ENCODE measurements at regions of chr11 and their contacts with region 1.

Region 1: DNA sequence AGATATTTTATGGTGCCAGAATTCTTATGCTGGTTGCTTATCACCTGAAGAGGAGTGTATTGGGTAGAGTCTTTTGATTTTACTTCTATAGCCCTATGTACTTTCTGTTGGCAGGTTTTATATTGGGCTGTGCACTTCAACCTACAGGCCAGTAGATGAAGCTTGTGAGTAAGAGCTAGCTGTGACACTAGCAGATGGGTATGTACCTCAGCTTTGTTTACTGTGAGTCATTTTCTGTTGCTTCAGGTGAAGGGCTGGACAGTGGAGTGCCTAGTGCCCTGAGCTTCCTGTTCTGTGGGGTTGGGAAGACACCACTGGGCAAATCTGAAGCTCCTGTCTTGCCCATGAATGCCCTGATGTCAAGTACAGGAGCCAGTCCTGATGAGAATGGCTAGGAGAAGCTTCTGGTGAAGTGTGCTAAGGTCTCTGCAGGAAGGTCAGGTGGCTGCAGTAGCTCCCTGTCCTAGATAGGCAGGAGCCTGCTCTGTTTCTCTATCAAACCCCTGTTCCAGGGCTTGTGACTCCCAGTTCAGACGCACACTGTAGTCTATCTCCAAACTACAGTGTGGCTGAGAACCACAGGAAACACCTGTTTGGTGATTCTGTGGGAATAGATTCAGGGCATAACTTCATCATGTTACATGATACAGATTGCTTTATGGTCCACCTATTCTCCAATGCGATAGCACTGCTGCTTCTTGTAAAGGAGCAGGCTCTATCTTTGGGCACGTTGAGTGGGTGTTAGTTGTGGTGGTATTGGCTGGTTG is 755.7 kb downstream of the KCNA4 start:
- DNase-seq: no peak
- H3K4me3 ChIP-seq: no peak overlapping the region
- H3K27ac ChIP-seq: no peak overlapping the region
- H3K4me1 ChIP-seq: no peaks in the 10 kb centered on the region
- H3K27me3 ChIP-seq: no peaks in the 10 kb centered on the region
- CTCF ChIP-seq: no peak
- EP300 ChIP-seq: no peak
- POLR2A ChIP-seq: no peak

Region 2: DNA sequence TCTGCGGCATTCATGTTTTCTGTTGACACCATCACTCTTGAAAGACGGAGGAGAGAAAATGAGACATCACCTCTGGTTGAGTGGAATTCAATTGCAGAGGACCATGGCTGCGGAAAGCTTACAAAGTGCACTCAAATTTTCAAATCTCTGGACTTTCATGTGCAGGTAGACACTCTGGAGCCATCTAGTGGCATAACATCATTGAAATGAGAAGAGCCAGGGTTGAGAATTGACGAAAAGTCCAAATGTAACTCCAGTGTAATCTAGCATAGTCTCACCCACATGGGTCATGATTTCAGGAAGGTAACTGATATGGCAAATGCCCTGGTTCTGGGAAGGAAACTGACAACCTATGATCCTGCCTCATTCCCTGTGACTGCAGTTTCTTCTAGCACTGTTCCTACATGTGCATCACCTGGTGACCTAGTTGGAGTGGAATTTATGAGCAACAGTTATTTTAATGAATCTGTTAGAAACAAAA is 67.9 kb after region 1 on chr11:
- in situ Hi-C with region 1: no loop called
- intact Hi-C with region 1: no loop called
- DNase-seq: no peak
- H3K4me3 ChIP-seq: no peak overlapping the region
- H3K27ac ChIP-seq: no peak overlapping the region
- H3K4me1 ChIP-seq: no peaks in the 10 kb centered on the region
- H3K27me3 ChIP-seq: no peaks in the 10 kb centered on the region
- CTCF ChIP-seq: peak in 3 of 5 experiments; percentile 15 to 26 (median 17)
- EP300 ChIP-seq: no peak
- POLR2A ChIP-seq: no peak

Region 3: DNA sequence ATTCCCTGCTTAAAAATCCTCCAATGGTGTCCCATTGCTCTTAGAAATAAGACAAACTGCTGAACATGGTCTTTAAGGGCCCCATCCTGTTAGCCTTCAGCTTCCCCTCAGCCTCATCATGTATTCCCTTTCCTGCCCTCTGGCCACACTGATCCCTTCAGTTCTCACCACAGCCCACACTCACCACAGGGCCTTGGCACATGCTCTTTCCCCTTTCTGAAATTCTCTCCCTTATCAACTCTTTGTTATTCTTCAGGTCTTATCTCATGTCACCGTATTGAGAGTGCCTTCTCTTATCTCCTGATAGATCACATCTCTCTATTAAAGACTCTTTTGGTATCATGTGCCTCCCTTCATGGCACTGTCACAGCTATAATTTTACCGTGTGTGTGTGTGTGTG is 1492.9 kb after region 1 on chr11:
- in situ Hi-C with region 1: no loop called
- intact Hi-C with region 1: loop called (anchors 5 kb)
- DNase-seq: no peak
- H3K4me3 ChIP-seq: no peak overlapping the region
- H3K27ac ChIP-seq: no peak overlapping the region
- H3K4me1 ChIP-seq: peaks cover 0 to 7% (median 0%) of the 10 kb centered on the region in 4 donors
- H3K27me3 ChIP-seq: no peaks in the 10 kb centered on the region
- CTCF ChIP-seq: no peak
- EP300 ChIP-seq: no peak
- POLR2A ChIP-seq: no peak

Measured in transverse colon (tissue), 4 donors.